AG04450 (cell line): ENCODE measurements at regions of chr3 and their contacts with region 1.

Region 1: DNA sequence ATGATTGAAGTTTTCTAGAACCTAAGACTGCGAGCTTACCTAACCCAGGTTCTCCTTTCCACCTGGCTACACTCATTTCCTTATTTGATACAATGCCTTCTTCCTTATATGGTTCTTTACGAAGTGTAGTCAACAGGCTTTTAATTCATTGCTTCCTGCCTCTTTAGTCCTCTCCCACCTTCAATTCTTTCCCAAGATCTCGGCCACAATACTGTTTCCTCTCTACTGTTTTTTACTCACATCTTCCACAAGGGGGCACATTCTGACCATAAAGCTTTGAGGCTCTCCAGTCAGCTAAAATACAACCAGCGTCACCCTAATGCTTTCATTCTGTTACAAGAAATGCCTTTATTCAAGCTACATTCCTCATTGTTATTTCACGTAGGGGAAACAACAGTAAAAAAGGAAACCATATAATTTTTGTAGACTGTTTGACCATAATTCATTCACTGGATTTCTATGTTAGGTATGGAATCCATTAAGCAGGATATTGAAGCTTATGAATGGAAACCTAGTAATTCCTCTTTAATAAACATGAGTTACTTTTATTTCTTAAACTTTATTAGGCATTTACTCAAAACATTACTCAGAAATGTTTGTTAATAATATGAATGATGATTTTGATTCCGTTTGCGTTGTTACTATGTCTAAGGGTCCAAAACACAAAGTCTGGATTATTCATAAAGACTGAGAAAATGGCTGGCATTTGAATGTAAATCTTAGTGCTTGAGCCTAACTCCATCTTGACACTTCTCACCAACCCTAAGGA is 29.5 kb upstream of the VEPH1 start:
- DNase-seq: peak; percentile 71
- H3K4me3 ChIP-seq: peak overlapping the region; percentile 52
- H3K27ac ChIP-seq: peak overlapping the region; percentile 86
- H3K27me3 ChIP-seq: no peaks in the 10 kb centered on the region
- CTCF ChIP-seq: peak; percentile 85

Region 2: GRCh38 chr3:157201648-157202278 is 330.9 kb before region 1 on chr3:
- CTCF ChIA-PET with region 1: interaction called, 60 read pairs
- POLR2A ChIA-PET with region 1: no interaction called
- DNase-seq: no peak
- H3K4me3 ChIP-seq: no peak overlapping the region
- H3K27ac ChIP-seq: no peak overlapping the region
- H3K27me3 ChIP-seq: no peaks in the 10 kb centered on the region
- CTCF ChIP-seq: peak; percentile 50

Region 3: GRCh38 chr3:157542711-157543500 is 10.2 kb after region 1 on chr3:
- CTCF ChIA-PET with region 1: interaction called, 60 read pairs
- POLR2A ChIA-PET with region 1: interaction called, 4 read pairs
- DNase-seq: peak; percentile 36
- H3K4me3 ChIP-seq: peak overlapping the region; percentile 60
- H3K27ac ChIP-seq: peak overlapping the region; percentile 21
- H3K27me3 ChIP-seq: no peaks in the 10 kb centered on the region
- CTCF ChIP-seq: peak; percentile 38

Region 4: DNA sequence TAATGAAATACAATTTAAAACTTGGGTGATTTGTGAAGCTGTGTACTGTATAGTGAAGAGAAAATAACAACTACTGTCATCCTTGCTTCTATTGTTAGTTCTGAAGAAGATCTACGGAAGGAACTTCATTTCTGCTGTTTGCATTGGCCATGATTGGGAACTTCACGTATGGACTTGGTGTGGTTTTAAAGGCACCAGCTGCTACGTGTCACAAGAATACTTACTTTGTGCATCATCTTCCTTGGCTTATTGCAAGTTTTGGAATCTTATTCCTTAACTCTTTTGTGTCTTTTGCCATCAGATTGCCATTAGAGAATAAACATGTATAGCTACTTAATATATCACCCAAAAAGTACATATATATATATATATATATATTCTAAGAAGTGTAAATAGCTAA is 45.5 kb after region 1 on chr3:
- CTCF ChIA-PET with region 1: interaction called, 241 read pairs
- POLR2A ChIA-PET with region 1: no interaction called
- DNase-seq: no peak
- H3K4me3 ChIP-seq: no peak overlapping the region
- H3K27ac ChIP-seq: no peak overlapping the region
- H3K27me3 ChIP-seq: no peaks in the 10 kb centered on the region
- CTCF ChIP-seq: no peak

Region 5: GRCh38 chr3:157618075-157618760 is 85.5 kb after region 1 on chr3:
- CTCF ChIA-PET with region 1: interaction called, 22 read pairs
- POLR2A ChIA-PET with region 1: no interaction called
- DNase-seq: peak; percentile 18
- H3K4me3 ChIP-seq: no peak overlapping the region
- H3K27ac ChIP-seq: no peak overlapping the region
- H3K27me3 ChIP-seq: peaks cover 8% of the 10 kb centered on the region
- CTCF ChIP-seq: peak; percentile 68

Region 6: DNA sequence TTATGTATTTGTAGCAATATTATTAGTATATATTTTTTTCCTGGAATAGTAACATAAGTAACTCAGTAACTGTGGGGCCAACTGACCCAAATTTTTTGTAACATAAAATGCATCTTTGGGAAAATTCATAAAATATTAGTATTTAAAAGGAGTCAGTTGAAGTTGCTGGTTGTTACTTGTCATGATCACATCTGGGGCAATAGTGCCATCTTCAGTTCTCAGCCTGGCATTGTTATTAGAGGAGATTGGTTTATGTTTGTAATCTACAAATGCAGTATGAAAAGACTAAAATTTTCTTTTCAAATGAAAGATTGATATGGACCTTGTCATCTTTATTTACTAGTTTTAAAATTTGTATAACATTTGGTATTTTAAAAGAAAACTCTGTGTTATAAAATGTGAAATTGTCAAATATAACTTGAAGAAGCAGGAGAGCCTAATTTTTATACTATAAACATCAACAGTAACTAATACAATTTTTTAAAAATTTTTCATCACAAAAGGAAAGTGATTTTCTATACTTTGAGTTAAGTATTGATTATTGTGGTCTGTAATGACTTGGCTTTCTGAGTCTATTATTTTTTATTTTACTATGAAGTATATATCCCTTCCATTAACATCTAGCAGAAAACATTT is 999.5 kb after region 1 on chr3:
- CTCF ChIA-PET with region 1: interaction called, 10 read pairs
- POLR2A ChIA-PET with region 1: no interaction called
- DNase-seq: peak; percentile 23
- H3K4me3 ChIP-seq: no peak overlapping the region
- H3K27ac ChIP-seq: no peak overlapping the region
- H3K27me3 ChIP-seq: no peaks in the 10 kb centered on the region
- CTCF ChIP-seq: peak; percentile 66